Activated B cell treated with CpG ODN at 0.5 μM for 24 hours (primary cell): ENCODE measurements at regions of chr12 and their contacts with region 1.

Region 1: DNA sequence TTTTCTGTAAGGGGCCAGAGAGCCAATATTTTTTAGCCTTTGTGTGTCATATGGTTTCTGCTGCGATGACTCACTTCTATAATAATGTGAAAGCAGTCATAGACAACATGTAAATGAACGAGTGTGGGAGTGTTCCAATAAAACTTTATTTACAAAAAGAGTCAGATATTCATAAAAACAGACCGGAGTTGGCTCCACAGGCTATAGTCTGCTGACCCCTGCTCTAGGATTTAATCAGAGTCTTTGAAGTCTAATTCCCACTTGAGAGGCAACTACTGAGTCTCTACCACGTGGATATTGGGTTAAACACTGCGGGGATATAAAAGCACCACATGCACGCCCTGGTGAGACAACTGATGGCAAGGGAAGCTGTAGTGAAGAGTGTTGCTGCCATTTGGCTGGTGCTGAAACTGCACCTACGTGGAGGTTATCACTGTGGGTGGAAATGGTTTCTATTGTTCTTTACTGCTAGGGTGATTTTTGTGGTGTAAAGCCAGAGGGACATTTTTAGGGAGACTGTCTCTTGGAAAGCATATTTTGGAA is 3.6 kb upstream of the NINJ2 start:
- DNase-seq: no peak
- ATAC-seq: no peak
- H3K4me3 Mint-ChIP-seq: peak overlapping the region; percentile 57
- H3K27ac Mint-ChIP-seq: peak overlapping the region; percentile 80
- H3K4me1 Mint-ChIP-seq: peaks cover 58% of the 10 kb centered on the region
- H3K27me3 Mint-ChIP-seq: no peaks in the 10 kb centered on the region
- CTCF ChIP-seq: no peak

Region 2: DNA sequence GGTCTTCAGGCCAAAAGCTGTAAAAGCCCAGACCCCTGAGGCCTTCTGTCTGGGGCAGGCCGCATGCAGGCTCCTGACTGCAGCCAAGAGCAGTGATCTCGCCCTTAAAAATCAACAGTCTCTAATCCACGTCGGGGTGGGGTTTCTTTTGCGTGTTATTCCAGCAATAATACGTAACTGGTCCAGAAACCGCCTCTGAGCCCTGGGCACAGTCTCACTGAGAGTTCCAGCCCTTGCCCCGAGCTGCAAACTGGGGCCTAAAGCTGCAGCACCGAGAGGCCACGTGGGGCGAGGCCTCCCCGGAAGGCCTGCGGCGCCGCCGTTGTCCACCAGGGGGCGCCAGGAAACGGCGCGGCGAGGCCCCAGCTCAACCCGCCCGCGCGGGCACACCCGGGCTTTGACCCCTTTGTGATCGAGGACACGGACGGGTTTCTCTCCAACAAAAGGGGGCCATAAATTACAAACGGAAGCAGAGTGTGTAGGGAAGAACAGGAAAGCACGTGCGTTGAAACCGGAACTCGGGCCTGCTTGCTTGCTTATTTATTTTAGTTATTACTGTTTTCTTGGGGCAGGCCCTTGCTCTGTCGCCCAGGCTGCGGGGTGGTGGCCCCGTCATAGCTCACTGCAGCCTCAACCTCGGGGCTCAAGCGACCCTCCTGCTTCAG is 90.8 kb before region 1 on chr12:
- CTCF ChIA-PET with region 1: no interaction called
- POLR2A ChIA-PET with region 1: no interaction called
- intact Hi-C with region 1: loop called (anchors 1 kb)
- DNase-seq: peak; percentile 91
- ATAC-seq: peak; percentile 99
- H3K4me3 Mint-ChIP-seq: peak overlapping the region; percentile 75
- H3K27ac Mint-ChIP-seq: no peak overlapping the region
- H3K4me1 Mint-ChIP-seq: peaks cover 11% of the 10 kb centered on the region
- H3K27me3 Mint-ChIP-seq: no peaks in the 10 kb centered on the region
- CTCF ChIP-seq: peak; percentile 70

Region 3: GRCh38 chr12:614411-614970 is 52.3 kb before region 1 on chr12:
- CTCF ChIA-PET with region 1: interaction called, 7 read pairs
- POLR2A ChIA-PET with region 1: interaction called, 3 read pairs
- intact Hi-C with region 1: loop called (anchors 1 kb)
- DNase-seq: peak; percentile 38
- ATAC-seq: peak; percentile 73
- H3K4me3 Mint-ChIP-seq: no peak overlapping the region
- H3K27ac Mint-ChIP-seq: no peak overlapping the region
- H3K4me1 Mint-ChIP-seq: peaks cover 25% of the 10 kb centered on the region
- H3K27me3 Mint-ChIP-seq: no peaks in the 10 kb centered on the region
- CTCF ChIP-seq: no peak

Region 4: DNA sequence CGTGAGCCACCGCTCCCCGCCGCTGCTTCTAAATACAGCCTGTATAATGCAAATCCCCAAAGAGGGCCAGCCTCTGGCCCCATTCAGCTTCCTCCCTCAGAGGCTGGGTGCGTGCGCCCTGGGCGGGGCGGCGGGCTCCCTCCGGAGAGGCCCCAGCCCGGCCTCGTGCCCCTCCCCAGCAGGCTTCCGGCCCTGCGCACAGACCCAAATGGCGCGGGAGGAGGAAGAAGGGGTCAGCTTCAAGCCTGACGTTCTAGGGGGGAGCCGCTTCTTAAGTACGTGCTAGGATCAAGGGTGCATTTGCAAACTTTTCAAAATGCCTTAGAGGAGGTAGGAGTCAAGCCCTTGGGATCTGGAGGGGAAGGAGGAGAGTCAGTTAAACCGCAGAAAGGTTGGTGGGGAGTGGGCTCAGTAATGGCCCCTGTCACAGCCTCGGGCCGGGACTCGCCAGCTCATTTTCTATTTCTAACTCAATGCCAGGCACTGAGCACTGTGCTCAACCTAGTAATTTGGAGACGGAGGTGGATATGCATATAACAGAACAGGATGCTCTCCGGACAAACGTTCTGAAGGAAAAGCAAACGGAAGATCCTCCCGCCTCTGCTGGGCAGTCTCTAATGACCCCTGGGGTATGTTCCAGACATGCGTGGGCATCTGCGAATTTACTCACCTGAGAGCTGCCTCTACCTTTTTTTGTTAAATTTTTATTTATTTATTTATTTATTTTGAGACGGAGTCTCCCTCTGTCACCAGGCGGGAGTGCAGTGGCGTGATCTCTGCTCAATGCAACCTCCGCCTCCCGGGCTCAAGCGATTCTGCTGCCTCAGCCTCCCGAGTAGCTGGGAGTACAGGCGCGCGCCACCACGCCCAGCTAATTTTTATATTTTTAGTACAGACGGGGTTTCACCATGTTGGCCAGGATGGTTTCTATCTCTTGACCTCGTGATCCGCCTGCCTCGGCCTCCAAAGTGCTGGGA is 35.9 kb before region 1 on chr12:
- CTCF ChIA-PET with region 1: no interaction called
- POLR2A ChIA-PET with region 1: interaction called, 6 read pairs
- intact Hi-C with region 1: loop called (anchors 5 kb)
- DNase-seq: peak; percentile 27
- ATAC-seq: peak; percentile 86
- H3K4me3 Mint-ChIP-seq: peak overlapping the region; percentile 80
- H3K27ac Mint-ChIP-seq: peak overlapping the region; percentile 83
- H3K4me1 Mint-ChIP-seq: peaks cover 47% of the 10 kb centered on the region
- H3K27me3 Mint-ChIP-seq: no peaks in the 10 kb centered on the region
- CTCF ChIP-seq: no peak

Region 5: DNA sequence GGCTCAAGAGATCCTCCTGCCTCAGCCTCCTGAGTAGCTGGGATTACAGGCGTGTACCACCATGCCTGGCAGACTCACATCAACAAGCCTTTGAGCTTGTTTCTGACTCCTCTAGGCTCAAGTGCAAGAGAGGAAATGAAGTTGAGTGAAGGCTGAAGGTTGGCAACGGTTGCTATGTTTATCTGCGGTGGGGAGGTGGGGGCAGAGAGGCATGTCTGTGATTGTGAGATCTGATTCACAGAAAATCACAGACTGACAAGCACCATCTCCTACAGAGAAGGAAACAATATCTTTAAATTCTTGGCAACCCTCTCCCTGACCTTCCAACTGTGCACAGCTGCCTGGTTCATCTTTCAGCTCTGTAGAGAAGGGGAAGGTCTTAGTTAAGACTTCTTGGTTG is 18.6 kb after region 1 on chr12:
- CTCF ChIA-PET with region 1: no interaction called
- POLR2A ChIA-PET with region 1: interaction called, 34 read pairs
- intact Hi-C with region 1: loop called (anchors 1 kb)
- DNase-seq: peak; percentile 64
- ATAC-seq: peak; percentile 79
- H3K4me3 Mint-ChIP-seq: peak overlapping the region; percentile 62
- H3K27ac Mint-ChIP-seq: peak overlapping the region; percentile 99
- H3K4me1 Mint-ChIP-seq: peaks cover 50% of the 10 kb centered on the region
- H3K27me3 Mint-ChIP-seq: no peaks in the 10 kb centered on the region
- CTCF ChIP-seq: no peak

Region 6: DNA sequence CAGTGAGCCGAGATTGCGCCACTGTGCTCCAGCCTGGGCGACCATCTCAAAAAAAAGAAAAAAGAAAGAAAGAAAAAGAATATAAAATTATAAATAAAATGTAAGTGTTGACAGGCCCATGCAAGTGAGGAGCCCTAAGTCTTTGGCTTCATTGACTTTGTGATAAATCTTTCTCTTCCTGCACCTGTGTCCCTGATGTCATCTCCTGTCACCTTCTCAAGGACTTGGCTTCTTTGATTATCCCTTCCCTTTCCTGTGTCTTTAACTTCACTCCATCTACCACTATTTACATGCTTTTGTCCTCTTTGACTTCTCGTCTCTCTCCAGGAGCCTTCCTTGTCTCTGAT is 51.9 kb after region 1 on chr12:
- CTCF ChIA-PET with region 1: interaction called, 3 read pairs
- POLR2A ChIA-PET with region 1: interaction called, 34 read pairs
- intact Hi-C with region 1: no loop called
- DNase-seq: no peak
- ATAC-seq: no peak
- H3K4me3 Mint-ChIP-seq: peak overlapping the region; percentile 44
- H3K27ac Mint-ChIP-seq: peak overlapping the region; percentile 94
- H3K4me1 Mint-ChIP-seq: peaks cover 43% of the 10 kb centered on the region
- H3K27me3 Mint-ChIP-seq: no peaks in the 10 kb centered on the region
- CTCF ChIP-seq: no peak